ENCODE measurements at regions of chr14 and their contacts with region 1.

Region 1: GRCh38 chr14:91060351-91061055 is at the start of gene RPS6KA5:
- DNase-seq: peak; percentile 100
- H3K4me3 Mint-ChIP-seq: peak within 1 kb of the TSS; percentile 87
- H3K27ac Mint-ChIP-seq: peak within 1 kb of the TSS; percentile 61
- H3K4me1 Mint-ChIP-seq: peaks cover 57% of the 10 kb centered on the region
- H3K27me3 Mint-ChIP-seq: no peaks in the 10 kb centered on the region
- total RNA-seq, gene RPS6KA5: 18.8 to 19.3 TPM

Region 2: GRCh38 chr14:90399541-90400444 is 660.7 kb before region 1 on chr14:
- CTCF ChIA-PET with region 1: no interaction called
- POLR2A ChIA-PET with region 1: no interaction called
- intact Hi-C with region 1: loop called (anchors 5 kb)
- DNase-seq: peak; percentile 92
- H3K4me3 Mint-ChIP-seq: peak overlapping the region; percentile 97
- H3K27ac Mint-ChIP-seq: peak overlapping the region; percentile 99
- H3K4me1 Mint-ChIP-seq: peaks cover 52% of the 10 kb centered on the region
- H3K27me3 Mint-ChIP-seq: no peaks in the 10 kb centered on the region

Region 3: GRCh38 chr14:90903101-90903500 is 157.4 kb before region 1 on chr14:
- CTCF ChIA-PET with region 1: interaction called, 12 read pairs
- POLR2A ChIA-PET with region 1: interaction called, 5 read pairs
- intact Hi-C with region 1: loop called (anchors 2 kb)
- DNase-seq: peak; percentile 63
- H3K4me3 Mint-ChIP-seq: no peak overlapping the region
- H3K27ac Mint-ChIP-seq: no peak overlapping the region
- H3K4me1 Mint-ChIP-seq: peaks cover 26% of the 10 kb centered on the region
- H3K27me3 Mint-ChIP-seq: no peaks in the 10 kb centered on the region

Region 4: DNA sequence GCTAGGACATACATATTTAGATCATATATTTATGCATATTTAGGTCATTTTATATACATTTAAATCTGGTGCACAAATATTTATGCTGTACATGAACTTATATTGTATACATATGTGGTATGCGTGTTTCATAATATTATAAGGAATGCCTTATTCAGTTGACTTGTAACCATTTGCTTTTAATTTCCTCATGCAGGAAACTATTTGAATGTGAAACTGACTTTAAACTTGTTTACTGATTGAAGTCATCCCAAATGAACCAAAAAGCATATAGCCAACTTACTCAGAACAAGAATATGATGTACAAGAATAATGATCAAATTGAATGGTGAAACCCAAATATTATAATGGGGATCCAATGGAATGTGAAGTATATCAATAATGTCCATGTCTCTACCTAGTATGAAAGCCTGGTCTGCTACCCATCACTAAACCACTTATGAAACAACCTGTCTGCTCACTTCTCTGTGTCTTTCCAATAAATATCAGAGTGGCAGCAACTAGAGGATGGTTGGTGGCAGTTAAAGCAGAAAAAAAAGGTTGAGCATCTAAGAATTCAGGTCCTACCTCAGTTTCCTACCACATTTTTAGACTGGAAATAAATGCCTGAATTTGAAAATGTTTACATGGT is 38.4 kb before region 1 on chr14:
- CTCF ChIA-PET with region 1: no interaction called
- POLR2A ChIA-PET with region 1: no interaction called
- intact Hi-C with region 1: loop called (anchors 1 kb)
- DNase-seq: no peak
- H3K4me3 Mint-ChIP-seq: peak overlapping the region; percentile 54
- H3K27ac Mint-ChIP-seq: peak overlapping the region; percentile 86
- H3K4me1 Mint-ChIP-seq: peaks cover 65% of the 10 kb centered on the region
- H3K27me3 Mint-ChIP-seq: no peaks in the 10 kb centered on the region

Region 5: DNA sequence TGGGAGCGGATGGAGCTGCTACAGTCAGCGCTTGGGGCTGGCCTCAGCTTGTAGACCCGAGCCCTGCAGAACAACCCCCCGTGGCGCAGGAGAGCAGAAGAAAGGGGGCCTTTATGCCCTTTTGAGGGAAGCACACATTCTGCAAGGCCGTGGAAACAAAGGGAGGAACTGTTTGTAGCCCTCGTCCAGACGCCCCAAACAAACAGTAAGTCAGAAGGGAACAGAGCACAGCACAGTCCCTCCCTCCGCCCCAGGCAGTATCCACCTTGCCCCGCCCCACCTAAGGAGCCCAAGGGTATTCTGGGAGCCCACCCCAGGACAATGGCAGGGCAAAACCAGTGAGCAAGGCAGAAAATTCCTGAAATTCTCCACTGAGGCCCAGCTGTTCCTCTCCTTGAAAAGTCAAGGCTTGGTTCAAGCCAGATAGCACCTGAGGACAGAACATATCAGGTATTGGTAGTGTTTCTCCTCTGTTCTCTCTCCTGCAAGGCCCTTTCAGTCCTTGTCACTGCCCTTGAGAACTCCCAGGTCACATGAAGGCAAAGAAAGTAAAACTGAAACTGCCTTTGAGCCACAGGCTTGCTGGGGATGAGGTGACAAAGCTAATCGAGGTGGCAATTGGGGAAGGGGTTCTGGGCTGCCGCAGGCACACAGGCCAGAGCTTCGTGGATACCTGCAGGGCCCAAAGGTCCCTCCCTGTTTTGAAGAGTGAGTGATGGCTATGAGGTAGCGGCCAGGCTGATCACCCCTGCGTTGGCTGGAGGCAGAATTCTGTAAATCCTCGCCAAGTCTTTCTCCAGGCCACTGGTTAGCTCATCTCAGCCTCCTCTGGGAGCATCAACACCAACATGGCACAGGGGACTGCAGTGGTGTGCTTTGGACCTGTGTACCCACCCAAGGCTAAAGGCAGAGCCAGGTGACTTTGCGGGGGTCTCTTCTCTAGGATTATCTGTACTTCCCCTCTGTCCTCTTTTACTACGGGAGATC is 53.9 kb after region 1 on chr14:
- CTCF ChIA-PET with region 1: interaction called, 29 read pairs
- POLR2A ChIA-PET with region 1: interaction called, 116 read pairs
- intact Hi-C with region 1: loop called (anchors 1 kb)
- DNase-seq: peak; percentile 81
- H3K4me3 Mint-ChIP-seq: peak overlapping the region; percentile 83
- H3K27ac Mint-ChIP-seq: peak overlapping the region; percentile 94
- H3K4me1 Mint-ChIP-seq: peaks cover 66% of the 10 kb centered on the region
- H3K27me3 Mint-ChIP-seq: no peaks in the 10 kb centered on the region

Region 6: GRCh38 chr14:91303091-91303923 is 242.8 kb after region 1 on chr14:
- CTCF ChIA-PET with region 1: no interaction called
- POLR2A ChIA-PET with region 1: no interaction called
- intact Hi-C with region 1: loop called (anchors 1 kb)
- DNase-seq: peak; percentile 94
- H3K4me3 Mint-ChIP-seq: peak overlapping the region; percentile 54
- H3K27ac Mint-ChIP-seq: peak overlapping the region; percentile 95
- H3K4me1 Mint-ChIP-seq: peaks cover 56% of the 10 kb centered on the region
- H3K27me3 Mint-ChIP-seq: no peaks in the 10 kb centered on the region